Right ventricle myocardium inferior (tissue), 1 donor: ENCODE measurements at regions of chr2 and their contacts with region 1.

Region 1: GRCh38 chr2:134070281-134070747 is 183.6 kb upstream of the MGAT5 start:
- DNase-seq: no peak
- ATAC-seq: no peak

Region 2: GRCh38 chr2:134027980-134028379 is 42.3 kb before region 1 on chr2:
- intact Hi-C with region 1: loop called (anchors 5 kb)
- DNase-seq: no peak
- ATAC-seq: peak; percentile 58